Common myeloid progenitor, CD34-positive (primary cell): ENCODE measurements at regions of chr4 and their contacts with region 1.

Region 1: GRCh38 chr4:110310795-110311194 is 112.4 kb upstream of the ELOVL6 start:
- DNase-seq: peak; percentile 29 to 75 (median 64)
- H3K4me3 ChIP-seq: no peak overlapping the region
- H3K27ac ChIP-seq: no peak overlapping the region
- H3K4me1 ChIP-seq: no peaks in the 10 kb centered on the region
- H3K27me3 ChIP-seq: no peaks in the 10 kb centered on the region

Region 2: DNA sequence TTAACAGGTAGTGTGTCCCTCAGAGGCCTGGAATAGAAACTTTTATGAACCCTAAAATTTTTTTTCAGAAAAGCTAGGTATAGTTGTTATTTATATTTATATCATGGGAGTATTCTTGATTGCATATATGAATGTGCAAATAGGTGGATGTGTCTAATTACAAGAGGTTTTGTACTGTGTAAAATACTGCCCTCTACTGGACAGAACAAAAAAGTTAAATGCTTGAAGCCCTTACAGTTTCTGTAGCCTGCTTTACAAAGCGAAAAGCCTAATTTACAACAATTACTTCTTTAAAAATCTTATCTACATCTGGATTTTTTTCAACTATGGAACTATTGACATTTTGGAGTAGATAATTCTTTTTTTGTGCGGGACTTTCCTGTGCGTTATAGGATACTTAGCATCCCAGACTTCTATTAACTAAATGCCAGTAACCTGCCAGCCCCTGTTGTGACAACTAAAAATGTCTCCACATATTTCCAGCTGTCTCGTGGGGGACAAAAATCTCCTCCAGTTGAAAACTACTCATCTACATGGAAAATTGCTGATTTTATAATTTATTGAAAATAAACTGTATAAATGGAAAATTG is 200.3 kb after region 1 on chr4:
- CTCF ChIA-PET with region 1: interaction called, 26 read pairs
- POLR2A ChIA-PET with region 1: no interaction called
- DNase-seq: peak; percentile 62 to 83 (median 78)
- H3K4me3 ChIP-seq: no peak overlapping the region
- H3K27ac ChIP-seq: no peak overlapping the region
- H3K4me1 ChIP-seq: peaks cover 0 to 10% (median 2%) of the 10 kb centered on the region in 4 experiments
- H3K27me3 ChIP-seq: no peaks in the 10 kb centered on the region